Activated CD8-positive, alpha-beta memory T cell treated with anti-CD3 and anti-CD28 coated beads, Interleukin-2, amount 10 ng/mL, durations not matched to agents 7 days and 5 days (primary cell): ENCODE measurements at regions of chr14 and their contacts with region 1.

Region 1: GRCh38 chr14:71138448-71139293 is 231.4 kb downstream of the PCNX1 start:
- DNase-seq: peak; percentile 67
- ATAC-seq: peak; percentile 24
- H3K4me3 Mint-ChIP-seq: no peak overlapping the region
- H3K27ac Mint-ChIP-seq: no peak overlapping the region
- H3K4me1 Mint-ChIP-seq: peaks cover 38% of the 10 kb centered on the region
- H3K27me3 Mint-ChIP-seq: no peaks in the 10 kb centered on the region

Region 2: DNA sequence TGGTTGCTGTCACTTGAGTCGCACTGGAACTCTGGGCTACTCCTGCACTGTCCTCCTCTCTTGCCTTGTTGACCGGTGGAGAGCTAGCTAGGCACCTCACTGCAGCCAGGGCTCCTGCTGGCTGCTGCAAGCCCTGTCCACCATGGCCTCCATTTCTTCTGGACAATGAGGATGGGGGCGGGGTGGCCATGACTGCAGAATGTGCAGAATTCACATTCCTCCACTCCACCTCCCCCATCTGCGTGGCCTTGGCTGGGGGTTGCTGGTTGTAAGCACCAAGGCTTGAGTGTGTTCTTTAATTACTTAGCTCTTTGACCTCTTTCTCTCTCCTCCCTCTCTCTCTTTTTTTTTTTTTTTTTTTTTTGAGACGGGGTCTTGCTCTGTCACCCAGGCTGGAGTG is 17.1 kb after region 1 on chr14:
- CTCF ChIA-PET with region 1: no interaction called
- DNase-seq: no peak
- ATAC-seq: no peak
- H3K4me3 Mint-ChIP-seq: no peak overlapping the region
- H3K27ac Mint-ChIP-seq: no peak overlapping the region
- H3K4me1 Mint-ChIP-seq: no peaks in the 10 kb centered on the region
- H3K27me3 Mint-ChIP-seq: peaks cover 7% of the 10 kb centered on the region

Region 3: GRCh38 chr14:71168564-71169427 is 30.1 kb after region 1 on chr14:
- CTCF ChIA-PET with region 1: interaction called, 20 read pairs
- DNase-seq: no peak
- ATAC-seq: peak; percentile 65
- H3K4me3 Mint-ChIP-seq: peak overlapping the region; percentile 69
- H3K27ac Mint-ChIP-seq: peak overlapping the region; percentile 80
- H3K4me1 Mint-ChIP-seq: peaks cover 32% of the 10 kb centered on the region
- H3K27me3 Mint-ChIP-seq: peaks cover 24% of the 10 kb centered on the region

Region 4: GRCh38 chr14:71320107-71320733 is 181.5 kb after region 1 on chr14:
- CTCF ChIA-PET with region 1: interaction called, 33 read pairs
- DNase-seq: peak; percentile 99
- ATAC-seq: peak; percentile 86
- H3K4me3 Mint-ChIP-seq: peak within 1 kb of the TSS; percentile 90
- H3K27ac Mint-ChIP-seq: peak within 1 kb of the TSS; percentile 90
- H3K4me1 Mint-ChIP-seq: peaks cover 44% of the 10 kb centered on the region
- H3K27me3 Mint-ChIP-seq: no peaks in the 10 kb centered on the region

Region 5: DNA sequence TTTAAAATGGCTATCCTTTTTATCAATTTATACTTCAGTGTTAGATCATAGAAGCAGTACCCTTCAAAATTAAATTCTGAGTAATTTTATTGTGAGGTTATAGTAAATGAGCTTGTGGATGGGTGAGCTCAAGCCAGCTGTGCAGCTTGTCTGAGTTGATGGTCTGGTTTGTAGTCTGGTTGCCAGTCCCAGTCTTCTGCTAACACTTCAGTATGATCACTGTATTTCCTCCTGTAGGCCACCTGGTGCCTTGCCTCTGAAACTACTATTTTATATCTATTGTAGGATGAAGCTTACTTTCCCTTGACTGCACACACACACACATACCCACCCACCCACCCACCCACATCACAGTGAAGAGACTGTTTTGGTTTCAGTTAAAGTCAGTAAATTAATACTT is 265.0 kb after region 1 on chr14:
- CTCF ChIA-PET with region 1: interaction called, 18 read pairs
- DNase-seq: peak; percentile 51
- ATAC-seq: peak; percentile 70
- H3K4me3 Mint-ChIP-seq: no peak overlapping the region
- H3K27ac Mint-ChIP-seq: peak overlapping the region; percentile 7
- H3K4me1 Mint-ChIP-seq: peaks cover 29% of the 10 kb centered on the region
- H3K27me3 Mint-ChIP-seq: no peaks in the 10 kb centered on the region

Region 6: GRCh38 chr14:71753126-71753830 is 614.6 kb after region 1 on chr14:
- CTCF ChIA-PET with region 1: interaction called, 101 read pairs
- DNase-seq: peak; percentile 78
- ATAC-seq: peak; percentile 81
- H3K4me3 Mint-ChIP-seq: no peak overlapping the region
- H3K27ac Mint-ChIP-seq: no peak overlapping the region
- H3K4me1 Mint-ChIP-seq: peaks cover 20% of the 10 kb centered on the region
- H3K27me3 Mint-ChIP-seq: peaks cover 2% of the 10 kb centered on the region

Region 7: GRCh38 chr14:71855399-71856036 is 716.8 kb after region 1 on chr14:
- CTCF ChIA-PET with region 1: interaction called, 17 read pairs
- DNase-seq: peak; percentile 65
- ATAC-seq: peak; percentile 45
- H3K4me3 Mint-ChIP-seq: no peak overlapping the region
- H3K27ac Mint-ChIP-seq: no peak overlapping the region
- H3K4me1 Mint-ChIP-seq: peaks cover 15% of the 10 kb centered on the region
- H3K27me3 Mint-ChIP-seq: peaks cover 52% of the 10 kb centered on the region